ENCODE measurements at regions of chr3 and their contacts with region 1.

Region 1: DNA sequence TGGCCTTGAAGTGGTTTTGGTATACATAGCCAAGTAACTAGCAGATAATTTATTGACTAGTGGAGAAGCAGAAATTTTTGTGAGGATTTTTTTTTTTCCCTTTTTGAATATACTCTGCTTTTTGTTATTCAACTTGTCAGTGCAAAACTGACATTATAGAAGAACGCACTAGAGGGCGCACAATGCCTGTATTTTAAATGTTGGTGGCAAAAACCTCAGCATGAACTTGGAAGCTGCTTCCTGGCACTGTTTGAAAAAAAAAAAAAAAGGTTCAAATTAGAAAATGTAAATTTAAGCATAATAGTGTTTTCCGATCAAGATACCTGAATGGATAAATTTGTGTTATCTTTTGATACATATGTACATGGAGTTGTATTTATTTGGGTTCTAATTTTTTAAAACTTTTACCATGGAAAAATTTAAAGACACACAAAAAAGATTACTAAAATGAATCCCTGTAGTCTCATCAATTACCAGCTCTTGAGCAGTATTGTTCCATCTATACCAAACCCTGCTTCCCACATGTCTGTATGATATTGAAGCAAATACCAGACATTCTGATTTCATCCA is 56.0 kb downstream of the SLC25A26 start:
- DNase-seq: peak; percentile 66
- ATAC-seq: no peak
- H3K4me3 ChIP-seq: no peak overlapping the region
- H3K27ac ChIP-seq: no peak overlapping the region
- H3K4me1 ChIP-seq: no peaks in the 10 kb centered on the region; the same call in 1 of the 2 replicates
- H3K27me3 ChIP-seq: no peaks in the 10 kb centered on the region
- CTCF ChIP-seq: peak; percentile 57

Region 2: GRCh38 chr3:66372681-66373350 is 96.0 kb after region 1 on chr3:
- CTCF ChIA-PET with region 1: interaction called, 4 read pairs
- POLR2A ChIA-PET with region 1: no interaction called
- intact Hi-C with region 1: loop called (anchors 1 kb)
- DNase-seq: peak; percentile 28
- ATAC-seq: peak; percentile 92
- H3K4me3 ChIP-seq: no peak overlapping the region
- H3K27ac ChIP-seq: no peak overlapping the region
- H3K4me1 ChIP-seq: no peaks in the 10 kb centered on the region; the same call in 1 of the 2 replicates
- H3K27me3 ChIP-seq: no peaks in the 10 kb centered on the region
- CTCF ChIP-seq: peak; percentile 42; the same call in 1 of the 2 replicates

Region 3: GRCh38 chr3:66816090-66816761 is 539.4 kb after region 1 on chr3:
- CTCF ChIA-PET with region 1: no interaction called
- POLR2A ChIA-PET with region 1: no interaction called
- intact Hi-C with region 1: loop called (anchors 2 kb)
- DNase-seq: peak; percentile 58
- ATAC-seq: peak; percentile 42
- H3K4me3 ChIP-seq: no peak overlapping the region
- H3K27ac ChIP-seq: no peak overlapping the region
- H3K4me1 ChIP-seq: no peaks in the 10 kb centered on the region
- H3K27me3 ChIP-seq: no peaks in the 10 kb centered on the region
- CTCF ChIP-seq: peak; percentile 41; the same call in 1 of the 2 replicates

Region 4: GRCh38 chr3:66836363-66837152 is 559.8 kb after region 1 on chr3:
- CTCF ChIA-PET with region 1: no interaction called
- POLR2A ChIA-PET with region 1: no interaction called
- intact Hi-C with region 1: loop called (anchors 5 kb)
- DNase-seq: peak; percentile 10
- ATAC-seq: no peak; the same call in 1 of the 2 replicates
- H3K4me3 ChIP-seq: no peak overlapping the region
- H3K27ac ChIP-seq: no peak overlapping the region
- H3K4me1 ChIP-seq: no peaks in the 10 kb centered on the region
- H3K27me3 ChIP-seq: no peaks in the 10 kb centered on the region
- CTCF ChIP-seq: peak; percentile 43; the same call in 1 of the 2 replicates